Panc1 (cell line): ENCODE measurements at regions of chr5 and their contacts with region 1.

Region 1: DNA sequence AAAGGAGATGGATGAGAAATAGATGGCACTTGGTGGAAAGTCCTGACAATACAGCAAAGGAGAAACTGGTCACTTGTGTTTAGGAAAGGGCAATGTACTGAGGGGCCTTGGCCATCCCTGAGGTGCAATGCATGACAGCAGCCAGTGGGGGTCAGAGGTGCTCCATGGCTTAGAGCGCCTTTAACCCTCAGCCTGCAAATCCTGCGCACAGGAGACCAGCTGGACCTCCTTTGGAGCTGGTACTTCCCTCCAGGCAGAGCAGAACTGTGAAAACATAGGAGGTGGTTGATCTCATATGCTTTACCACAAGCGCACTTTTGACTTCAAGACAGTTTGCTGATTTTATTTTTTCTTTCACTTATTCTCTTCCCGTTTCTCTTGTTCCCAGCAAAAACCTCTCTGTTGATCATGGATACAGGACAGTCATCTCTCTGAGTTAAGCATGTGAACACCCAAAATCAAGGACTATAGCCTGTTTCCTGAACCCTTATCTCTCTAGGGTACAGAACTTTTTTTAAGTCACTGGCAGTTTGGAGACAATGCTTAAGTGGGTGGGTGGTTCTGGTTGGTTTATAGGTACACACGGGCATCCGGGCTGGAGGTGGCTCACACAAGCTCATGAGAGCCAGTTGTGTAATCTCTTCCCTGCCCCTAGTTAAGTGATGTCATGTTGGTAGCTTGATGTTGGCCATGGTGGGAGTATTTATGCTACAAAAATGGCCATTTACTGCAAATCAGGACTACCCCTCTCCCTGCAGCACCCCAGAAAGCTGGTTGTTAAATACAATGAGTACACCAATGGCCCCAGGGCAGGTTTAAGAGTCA is 37.6 kb upstream of the ANKRD55 start:
- DNase-seq: peak; percentile 82
- ATAC-seq: peak; percentile 100
- H3K4me3 ChIP-seq: no peak overlapping the region
- H3K27ac ChIP-seq: peak overlapping the region; percentile 37
- H3K4me1 ChIP-seq: peaks cover 5% of the 10 kb centered on the region; the same call in 1 of the 2 replicates
- H3K27me3 ChIP-seq: no peaks in the 10 kb centered on the region
- CTCF ChIP-seq: peak; percentile 99

Region 2: GRCh38 chr5:55800924-55801323 is 469.9 kb before region 1 on chr5:
- CTCF ChIA-PET with region 1: no interaction called
- POLR2A ChIA-PET with region 1: no interaction called
- in situ Hi-C with region 1: no loop called
- intact Hi-C with region 1: no loop called
- DNase-seq: no peak
- ATAC-seq: no peak
- H3K4me3 ChIP-seq: no peak overlapping the region
- H3K27ac ChIP-seq: no peak overlapping the region
- H3K4me1 ChIP-seq: no peaks in the 10 kb centered on the region
- H3K27me3 ChIP-seq: no peaks in the 10 kb centered on the region
- CTCF ChIP-seq: no peak

Region 3: GRCh38 chr5:56460679-56461191 is 190.0 kb after region 1 on chr5:
- CTCF ChIA-PET with region 1: no interaction called
- POLR2A ChIA-PET with region 1: no interaction called
- in situ Hi-C with region 1: no loop called
- intact Hi-C with region 1: loop called (anchors 10 kb)
- DNase-seq: no peak
- ATAC-seq: peak; percentile 62; the same call in 1 of the 2 replicates
- H3K4me3 ChIP-seq: no peak overlapping the region
- H3K27ac ChIP-seq: no peak overlapping the region
- H3K4me1 ChIP-seq: peaks cover 8% of the 10 kb centered on the region; the same call in 1 of the 2 replicates
- H3K27me3 ChIP-seq: no peaks in the 10 kb centered on the region
- CTCF ChIP-seq: no peak

Region 4: GRCh38 chr5:56717253-56717987 is 446.6 kb after region 1 on chr5:
- CTCF ChIA-PET with region 1: no interaction called
- POLR2A ChIA-PET with region 1: interaction called, 10 read pairs
- in situ Hi-C with region 1: no loop called
- intact Hi-C with region 1: no loop called
- DNase-seq: no peak
- ATAC-seq: no peak; the same call in 1 of the 2 replicates
- H3K4me3 ChIP-seq: 0 out of 4 replicates have a peak overlapping the region, but pooled peaks of 1 of the 2 experiments have one; percentile 2
- H3K27ac ChIP-seq: no peak overlapping the region
- H3K4me1 ChIP-seq: no peaks in the 10 kb centered on the region
- H3K27me3 ChIP-seq: peaks cover 19% of the 10 kb centered on the region
- CTCF ChIP-seq: no peak

Region 5: DNA sequence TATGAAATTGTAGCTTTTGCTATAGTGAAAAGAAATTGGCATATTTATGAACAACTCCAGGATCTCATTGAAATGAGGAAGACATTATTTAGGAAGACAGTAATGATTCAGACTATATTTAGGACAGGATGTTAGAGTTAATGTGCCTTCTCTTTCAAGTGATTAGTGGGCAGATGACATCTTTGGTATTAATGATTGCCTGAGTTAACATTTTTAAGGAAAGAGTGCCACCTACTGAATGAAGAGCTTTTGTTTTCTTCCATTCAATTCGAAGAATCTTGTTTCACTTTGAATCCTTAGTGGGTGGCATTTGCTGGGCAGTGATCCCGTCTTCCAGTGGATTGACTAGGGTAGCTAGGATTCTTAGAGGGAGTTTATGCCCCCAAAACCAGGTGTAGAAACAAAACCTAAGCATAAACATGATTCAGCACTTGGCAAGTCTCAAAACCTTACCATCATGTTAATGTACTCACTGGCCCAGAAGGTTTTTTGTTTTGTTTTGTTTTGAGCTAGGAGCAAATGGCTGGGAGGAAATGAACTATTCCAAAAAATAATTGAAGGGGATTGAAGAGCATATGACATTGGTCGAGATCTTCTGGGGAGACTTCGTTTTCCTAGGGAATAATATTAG is 567.7 kb after region 1 on chr5:
- CTCF ChIA-PET with region 1: interaction called, 21 read pairs
- POLR2A ChIA-PET with region 1: interaction called, 3 read pairs
- in situ Hi-C with region 1: no loop called
- intact Hi-C with region 1: loop called (anchors 1 kb)
- DNase-seq: no peak
- ATAC-seq: peak; percentile 76
- H3K4me3 ChIP-seq: peak overlapping the region; percentile 7 to 23; a peak in 3 of 4 replicates
- H3K27ac ChIP-seq: peak overlapping the region; percentile 70
- H3K4me1 ChIP-seq: peaks cover 6% of the 10 kb centered on the region; the same call in 1 of the 2 replicates
- H3K27me3 ChIP-seq: no peaks in the 10 kb centered on the region
- CTCF ChIP-seq: peak; percentile 59